ENCODE measurements at regions of chr17 and their contacts with region 1.

Region 1: GRCh38 chr17:17681187-17681848 is at the start of gene RAI1:
- DNase-seq: peak; percentile 74 to 87
- ATAC-seq: peak; percentile 48 to 53
- H3K4me3 ChIP-seq: peak within 1 kb of the TSS; percentile 77
- H3K27ac ChIP-seq: peak within 1 kb of the TSS; percentile 94 to 97
- H3K4me1 ChIP-seq: peaks cover 35% of the 10 kb centered on the region
- CTCF ChIP-seq: peak; percentile 99
- EP300 ChIP-seq: no peak
- POLR2A ChIP-seq: peak; percentile 20; the same call in 1 of the 2 replicates
- RAD21 ChIP-seq: peak; percentile 59 to 98
- polyA plus RNA-seq, gene RAI1: 3.5 and 7.1 TPM in 2 replicates

Region 2: GRCh38 chr17:17663160-17664063 is 17.9 kb before region 1 on chr17:
- CTCF ChIA-PET with region 1: interaction called, 79 read pairs
- POLR2A ChIA-PET with region 1: no interaction called
- DNase-seq: peak; percentile 80 to 84
- ATAC-seq: peak; percentile 73 to 87
- H3K4me3 ChIP-seq: no peak overlapping the region
- H3K27ac ChIP-seq: peak overlapping the region in 1 of 2 experiments; percentile 22; a peak in 3 of 6 replicates
- H3K4me1 ChIP-seq: peaks cover 20% of the 10 kb centered on the region
- CTCF ChIP-seq: no peak
- EP300 ChIP-seq: no peak
- POLR2A ChIP-seq: no peak
- RAD21 ChIP-seq: no peak

Region 3: GRCh38 chr17:17706140-17707060 is 25.1 kb after region 1 on chr17:
- CTCF ChIA-PET with region 1: interaction called, 14 read pairs
- POLR2A ChIA-PET with region 1: no interaction called
- DNase-seq: no peak
- ATAC-seq: no peak
- H3K4me3 ChIP-seq: no peak overlapping the region
- H3K27ac ChIP-seq: peak overlapping the region in 1 of 2 experiments; percentile 95; a peak in 3 of 6 replicates
- H3K4me1 ChIP-seq: peaks cover 69% of the 10 kb centered on the region
- CTCF ChIP-seq: no peak
- EP300 ChIP-seq: no peak
- POLR2A ChIP-seq: no peak
- RAD21 ChIP-seq: no peak

Region 4: DNA sequence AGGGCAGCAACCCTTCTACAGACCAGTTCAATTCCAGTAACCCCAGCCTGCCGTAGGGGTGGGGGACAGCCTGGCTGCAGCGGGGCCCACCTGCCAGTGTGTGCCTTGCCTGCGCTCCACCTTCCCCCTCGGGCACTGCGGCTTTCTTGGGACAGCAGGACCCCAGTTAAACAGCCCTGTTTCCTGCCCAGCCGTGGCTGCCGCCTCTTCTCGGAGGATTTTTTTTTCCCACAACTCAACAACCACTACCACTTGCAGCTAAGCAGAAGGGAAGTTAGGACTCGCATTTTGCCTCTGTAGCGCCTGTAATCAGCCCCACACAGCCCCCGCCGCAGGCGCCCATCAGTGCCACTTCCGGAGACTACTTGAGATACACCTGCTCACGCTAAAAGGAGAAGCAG is 76.1 kb after region 1 on chr17:
- CTCF ChIA-PET with region 1: interaction called, 17 read pairs
- POLR2A ChIA-PET with region 1: no interaction called
- DNase-seq: no peak
- ATAC-seq: no peak
- H3K4me3 ChIP-seq: no peak overlapping the region
- H3K27ac ChIP-seq: no peak overlapping the region
- H3K4me1 ChIP-seq: peaks cover 14% of the 10 kb centered on the region
- CTCF ChIP-seq: no peak
- EP300 ChIP-seq: no peak
- POLR2A ChIP-seq: no peak
- RAD21 ChIP-seq: no peak

Region 5: GRCh38 chr17:17774009-17774881 is 92.9 kb after region 1 on chr17:
- CTCF ChIA-PET with region 1: interaction called, 55 read pairs
- POLR2A ChIA-PET with region 1: interaction called, 6 read pairs
- DNase-seq: peak; percentile 39 to 74
- ATAC-seq: peak; percentile 32 to 72; a peak in 4 of 6 replicates
- H3K4me3 ChIP-seq: no peak overlapping the region
- H3K27ac ChIP-seq: peak overlapping the region; percentile 41 to 61; a peak in 4 of 6 replicates
- H3K4me1 ChIP-seq: peaks cover 31% of the 10 kb centered on the region
- CTCF ChIP-seq: peak; percentile 45
- EP300 ChIP-seq: no peak
- POLR2A ChIP-seq: no peak
- RAD21 ChIP-seq: peak; percentile 53 to 60; a peak in 4 of 5 replicates

Region 6: DNA sequence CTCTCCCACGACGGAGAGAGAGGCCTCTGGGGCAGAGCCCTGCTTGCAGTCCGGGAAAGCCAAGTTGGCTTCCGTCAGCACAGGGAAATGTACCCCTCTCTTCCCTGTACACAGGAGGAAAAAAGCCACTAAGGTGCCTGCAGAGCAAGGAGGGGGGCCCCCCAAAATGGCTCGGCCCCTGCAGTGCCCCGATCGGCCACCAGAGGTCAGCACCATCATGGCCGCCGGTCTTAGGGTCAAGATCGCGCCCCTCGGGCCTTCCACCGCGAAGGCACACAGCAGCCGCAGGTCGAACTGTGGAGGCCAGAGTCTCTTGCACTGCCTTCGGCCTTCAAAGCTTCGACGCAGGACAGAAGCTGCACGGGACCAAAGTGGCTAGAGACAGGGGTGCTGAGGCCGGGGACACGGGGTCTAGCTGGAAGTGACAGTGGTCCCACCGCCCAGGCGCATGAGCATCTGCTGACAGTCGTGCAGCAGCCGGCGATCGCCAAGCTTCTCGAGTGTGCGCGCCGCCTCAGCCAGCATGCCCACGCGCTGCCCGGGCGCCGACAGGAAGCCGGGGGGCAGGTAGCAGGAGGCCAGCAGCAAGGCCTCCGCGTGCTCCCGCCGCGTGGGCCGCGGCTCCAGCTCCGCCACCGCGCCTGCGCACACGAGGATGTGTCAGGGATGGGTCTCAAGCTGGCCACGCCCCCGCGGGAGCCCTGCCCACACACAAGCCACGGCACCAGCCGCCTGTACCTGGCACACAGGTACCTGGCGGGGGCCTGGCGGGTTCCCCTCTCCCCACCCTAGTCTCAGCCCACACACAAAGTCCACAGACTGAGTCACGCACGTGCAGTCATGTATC is 131.1 kb after region 1 on chr17:
- CTCF ChIA-PET with region 1: interaction called, 73 read pairs
- POLR2A ChIA-PET with region 1: no interaction called
- DNase-seq: peak; percentile 82 to 89
- ATAC-seq: peak; percentile 1 to 46; a peak in 3 of 6 replicates
- H3K4me3 ChIP-seq: 0 out of 3 replicates have a peak overlapping the region, but pooled peaks have one; percentile 17
- H3K27ac ChIP-seq: peak overlapping the region; percentile 62 to 78
- H3K4me1 ChIP-seq: peaks cover 63% of the 10 kb centered on the region
- CTCF ChIP-seq: peak; percentile 97
- EP300 ChIP-seq: no peak
- POLR2A ChIP-seq: no peak
- RAD21 ChIP-seq: peak; percentile 90 to 94

Region 7: DNA sequence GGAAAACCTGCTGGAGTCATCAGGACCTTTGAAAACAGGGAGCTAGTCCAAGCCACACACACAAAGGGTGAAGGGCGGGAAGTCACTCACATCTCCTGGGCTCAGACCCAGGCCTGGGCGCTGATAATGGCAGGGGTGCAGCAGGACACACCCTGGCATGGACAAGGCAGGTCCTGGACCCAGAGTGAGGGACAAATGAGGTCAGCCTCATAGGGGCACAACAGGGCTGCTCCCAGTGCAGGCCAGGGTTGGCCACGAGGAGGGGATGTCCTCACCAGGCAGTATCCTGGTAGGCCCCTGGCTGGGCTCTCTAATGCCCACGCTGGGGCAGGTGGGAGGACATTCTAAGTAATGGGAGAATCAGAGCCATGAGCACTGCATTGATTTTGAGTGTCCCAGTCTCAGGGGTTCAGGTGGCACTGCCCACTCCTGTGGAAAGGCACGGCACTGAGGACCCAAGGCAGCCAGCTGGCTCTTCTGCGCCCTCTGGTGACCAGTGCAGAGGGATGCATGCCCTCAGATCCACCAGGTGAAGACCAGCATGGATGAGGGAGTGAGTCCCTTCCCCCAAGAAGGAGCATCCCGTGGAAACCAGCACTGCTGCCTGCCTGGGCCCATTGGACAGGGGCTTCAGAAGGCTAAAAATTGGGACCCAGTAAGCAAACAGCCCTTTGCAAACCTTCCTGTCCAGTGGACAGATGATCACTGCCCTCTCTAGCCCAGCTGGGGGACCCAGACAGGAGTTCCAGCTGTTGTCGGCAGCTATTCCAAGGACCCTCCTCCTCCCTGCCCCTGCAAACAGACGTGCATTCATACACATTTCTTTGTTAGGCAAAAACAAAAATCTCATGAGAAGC is 178.8 kb after region 1 on chr17:
- CTCF ChIA-PET with region 1: interaction called, 53 read pairs
- POLR2A ChIA-PET with region 1: no interaction called
- DNase-seq: peak; percentile 72 to 97
- ATAC-seq: peak; percentile 94 to 97
- H3K4me3 ChIP-seq: no peak overlapping the region
- H3K27ac ChIP-seq: peak overlapping the region; percentile 15 to 61; a peak in 4 of 6 replicates
- H3K4me1 ChIP-seq: peaks cover 8% of the 10 kb centered on the region; the same call in 2 of the 3 replicates
- CTCF ChIP-seq: peak; percentile 99
- EP300 ChIP-seq: no peak
- POLR2A ChIP-seq: no peak
- RAD21 ChIP-seq: peak; percentile 98 to 99

Measured in A549 (cell line).